ENCODE measurements at regions of chr4 and their contacts with region 1.

Region 1: DNA sequence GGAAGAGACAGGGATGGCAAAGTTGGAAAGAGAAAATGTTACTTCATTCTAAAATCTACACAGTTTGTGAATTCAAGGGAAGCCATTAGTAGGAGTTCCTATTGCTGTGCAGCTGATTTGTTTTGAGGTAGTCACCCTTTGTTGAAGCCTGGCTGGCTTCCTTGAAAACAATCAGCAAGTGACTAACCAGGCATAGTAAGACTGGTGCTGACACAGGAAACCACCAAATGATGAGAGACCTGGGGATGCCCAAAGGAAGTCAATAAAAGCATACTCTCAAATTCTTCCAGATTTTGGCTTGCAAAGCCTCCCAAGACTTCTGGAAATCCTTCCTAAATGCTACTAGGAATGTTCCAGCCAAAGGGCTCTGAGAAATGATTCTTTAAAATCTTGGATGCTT is 23.9 kb upstream of the PRDM8 start:
- DNase-seq: peak in 8 of 9 donors; percentile 42 to 78 (median 72)
- ATAC-seq: peak; percentile 98
- H3K4me3 ChIP-seq: peak overlapping the region; percentile 26
- H3K4me3 Mint-ChIP-seq: peak overlapping the region; percentile 66 to 84 (median 76)
- H3K27ac ChIP-seq: peak overlapping the region; percentile 75
- H3K27ac Mint-ChIP-seq: peak overlapping the region; percentile 92 to 99 (median 96)
- H3K4me1 ChIP-seq: peaks cover 33 to 40% of the 10 kb centered on the region in 2 donors
- H3K4me1 Mint-ChIP-seq: peaks cover 33 to 72% (median 60%) of the 10 kb centered on the region in 7 donors
- H3K27me3 ChIP-seq: no peaks in the 10 kb centered on the region
- H3K27me3 Mint-ChIP-seq: peaks cover 0 to 2% (median 0%) of the 10 kb centered on the region in 5 donors

Region 2: GRCh38 chr4:80138551-80139538 is 34.6 kb before region 1 on chr4:
- CTCF ChIA-PET with region 1: interaction called, 14 read pairs
- POLR2A ChIA-PET with region 1: interaction called, 25 read pairs
- intact Hi-C with region 1: loop called (anchors 1 kb)
- DNase-seq: peak in 8 of 9 donors; percentile 50 to 77 (median 64)
- ATAC-seq: peak; percentile 89
- H3K4me3 ChIP-seq: no peak overlapping the region
- H3K4me3 Mint-ChIP-seq: peak overlapping the region in 7 of 10 donors; percentile 24 to 65 (median 48)
- H3K27ac ChIP-seq: no peak overlapping the region
- H3K27ac Mint-ChIP-seq: peak overlapping the region; percentile 58 to 91 (median 84)
- H3K4me1 ChIP-seq: peaks cover 20 to 32% of the 10 kb centered on the region in 2 donors
- H3K4me1 Mint-ChIP-seq: peaks cover 30 to 71% (median 56%) of the 10 kb centered on the region in 7 donors
- H3K27me3 ChIP-seq: no peaks in the 10 kb centered on the region
- H3K27me3 Mint-ChIP-seq: no peaks in the 10 kb centered on the region

Region 3: DNA sequence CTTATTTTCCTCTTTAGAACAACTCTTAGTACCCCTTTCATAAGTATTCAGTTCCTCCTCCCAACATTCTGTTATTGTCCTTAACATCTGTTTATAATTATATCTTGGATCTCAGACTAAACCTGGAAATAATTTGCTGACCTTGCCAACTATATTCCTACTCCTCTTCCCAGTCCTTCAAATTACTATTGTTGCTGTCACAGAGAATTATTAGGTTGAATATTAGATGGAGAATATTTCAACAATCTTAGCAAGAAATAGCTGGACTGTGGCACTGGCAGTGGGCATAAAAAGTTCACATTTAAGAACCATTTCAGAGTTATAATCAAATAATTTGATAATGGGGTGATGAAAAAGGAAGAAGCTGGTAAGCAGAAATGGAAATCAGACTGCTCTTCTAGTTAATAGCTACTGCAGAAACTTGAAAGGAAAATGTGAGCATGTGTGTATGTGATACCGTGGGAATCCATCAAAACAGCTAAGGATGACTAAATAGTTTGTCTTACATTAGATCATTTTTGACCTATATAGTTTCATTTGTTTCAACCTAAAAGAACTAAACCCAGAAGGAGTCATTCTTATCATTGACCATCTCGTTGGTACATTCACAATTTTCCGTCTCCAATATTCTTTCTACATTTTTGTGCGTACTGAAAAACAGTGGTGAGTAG is 19.4 kb before region 1 on chr4:
- CTCF ChIA-PET with region 1: interaction called, 6 read pairs
- POLR2A ChIA-PET with region 1: interaction called, 6 read pairs
- intact Hi-C with region 1: loop called in 1 of 2 experiments (anchors 1 kb)
- DNase-seq: no peak
- ATAC-seq: no peak
- H3K4me3 ChIP-seq: no peak overlapping the region
- H3K4me3 Mint-ChIP-seq: peak overlapping the region in 1 of 10 donors; percentile 6
- H3K27ac ChIP-seq: no peak overlapping the region
- H3K27ac Mint-ChIP-seq: peak overlapping the region in 2 of 9 donors; percentile 30 to 63
- H3K4me1 ChIP-seq: no peaks in the 10 kb centered on the region
- H3K4me1 Mint-ChIP-seq: peaks cover 0 to 14% (median 10%) of the 10 kb centered on the region in 7 donors
- H3K27me3 ChIP-seq: no peaks in the 10 kb centered on the region
- H3K27me3 Mint-ChIP-seq: peaks cover 0 to 6% (median 0%) of the 10 kb centered on the region in 5 donors